Activated CD4-positive, alpha-beta T cell treated with anti-CD3 and anti-CD28 coated beads, Interleukin-2, amount 10 ng/mL, durations not matched to agents 24 days and 14 days (primary cell): ENCODE measurements at regions of chr3 and their contacts with region 1.

Region 1: GRCh38 chr3:9179826-9180763 is 69.4 kb downstream of the SRGAP3 start:
- DNase-seq: peak; percentile 75
- H3K4me3 Mint-ChIP-seq: peak overlapping the region; percentile 76
- H3K27ac Mint-ChIP-seq: peak overlapping the region; percentile 85
- H3K4me1 Mint-ChIP-seq: peaks cover 36% of the 10 kb centered on the region
- H3K27me3 Mint-ChIP-seq: peaks cover 8% of the 10 kb centered on the region

Region 2: GRCh38 chr3:8972639-8973038 is 207.5 kb before region 1 on chr3:
- intact Hi-C with region 1: no loop called
- DNase-seq: no peak
- H3K4me3 Mint-ChIP-seq: no peak overlapping the region
- H3K27ac Mint-ChIP-seq: no peak overlapping the region
- H3K4me1 Mint-ChIP-seq: peaks cover 5% of the 10 kb centered on the region
- H3K27me3 Mint-ChIP-seq: peaks cover 6% of the 10 kb centered on the region

Region 3: DNA sequence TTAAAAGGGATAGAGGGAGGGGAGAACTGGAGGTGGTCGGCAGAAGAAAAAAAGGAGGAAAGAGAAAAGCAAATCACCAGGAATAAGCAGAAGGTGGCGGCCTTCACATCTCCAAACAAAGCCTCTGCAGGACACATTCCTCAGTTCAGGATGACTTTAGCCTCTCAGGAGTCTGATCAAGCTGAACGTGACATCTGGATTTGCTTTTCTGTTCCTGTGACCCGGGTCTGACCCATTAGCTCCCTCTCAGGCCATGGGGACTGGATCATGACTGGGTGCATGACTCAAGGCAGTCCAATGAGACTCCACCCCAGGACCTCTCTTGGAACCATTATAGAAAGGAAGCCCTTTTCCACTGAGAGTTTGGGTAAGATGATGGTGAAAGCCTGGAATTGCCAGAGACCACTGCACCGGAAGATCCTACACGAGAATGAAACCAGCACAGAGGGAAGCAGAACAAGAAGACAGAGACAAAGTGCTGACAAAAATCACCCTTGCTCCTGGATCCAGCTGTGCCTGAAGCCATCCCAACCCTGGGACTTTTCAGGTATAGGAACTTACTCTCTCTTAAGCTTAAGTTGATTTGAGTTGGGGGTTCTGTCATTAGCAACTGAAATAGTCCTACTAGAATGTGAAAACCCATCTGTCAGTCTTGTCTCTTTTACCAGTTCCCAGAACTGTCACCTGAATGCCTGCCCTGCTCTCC is 171.4 kb before region 1 on chr3:
- intact Hi-C with region 1: no loop called
- DNase-seq: no peak
- H3K4me3 Mint-ChIP-seq: no peak overlapping the region
- H3K27ac Mint-ChIP-seq: no peak overlapping the region
- H3K4me1 Mint-ChIP-seq: peaks cover 7% of the 10 kb centered on the region
- H3K27me3 Mint-ChIP-seq: peaks cover 2% of the 10 kb centered on the region

Region 4: DNA sequence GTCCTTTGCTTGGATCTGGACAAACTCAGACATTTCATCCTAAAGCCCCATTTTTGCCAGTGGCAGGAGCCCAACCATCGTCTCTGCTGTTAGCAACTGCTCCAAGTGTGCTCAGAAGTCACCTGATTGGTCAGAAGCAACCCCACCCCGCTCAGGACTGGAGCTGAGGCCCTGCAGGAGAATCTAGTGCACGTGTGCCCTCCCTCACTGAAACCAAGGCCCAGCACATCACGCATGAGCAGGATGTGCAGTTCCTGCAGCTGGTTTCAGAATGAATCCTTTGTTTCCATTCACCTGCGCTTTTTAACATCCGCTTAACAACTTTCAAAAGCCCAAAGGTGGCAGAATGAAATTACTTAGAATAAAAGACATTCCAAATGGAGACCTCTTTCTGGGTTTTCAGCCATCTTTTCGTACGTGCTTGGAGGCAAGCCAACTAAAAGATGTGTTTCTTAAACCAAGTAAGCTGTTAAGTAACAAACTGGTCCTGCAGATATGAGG is 11.8 kb before region 1 on chr3:
- intact Hi-C with region 1: loop called (anchors 1 kb)
- DNase-seq: peak; percentile 92
- H3K4me3 Mint-ChIP-seq: peak overlapping the region; percentile 49
- H3K27ac Mint-ChIP-seq: peak overlapping the region; percentile 22
- H3K4me1 Mint-ChIP-seq: peaks cover 21% of the 10 kb centered on the region
- H3K27me3 Mint-ChIP-seq: no peaks in the 10 kb centered on the region

Region 5: DNA sequence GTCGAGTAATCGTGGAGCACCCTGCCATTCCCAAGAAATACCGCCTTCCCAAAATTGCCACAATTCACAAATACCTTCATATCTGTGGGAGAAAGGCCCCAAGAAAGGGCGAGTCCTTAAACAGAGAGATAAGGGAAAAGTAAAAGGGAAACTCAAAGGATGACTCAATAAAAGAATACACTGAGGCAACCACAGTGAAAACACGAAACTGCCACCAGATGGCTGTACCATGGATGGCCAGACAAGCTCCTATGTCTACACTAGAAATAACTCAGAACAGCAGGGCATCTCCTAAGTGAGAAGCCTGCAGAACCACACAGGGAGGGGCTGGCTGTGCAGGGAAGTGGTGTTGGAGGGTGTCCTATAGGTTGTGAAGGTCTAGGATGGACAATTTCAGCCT is 44.4 kb after region 1 on chr3:
- intact Hi-C with region 1: loop called (anchors 5 kb)
- DNase-seq: peak; percentile 72
- H3K4me3 Mint-ChIP-seq: no peak overlapping the region
- H3K27ac Mint-ChIP-seq: no peak overlapping the region
- H3K4me1 Mint-ChIP-seq: peaks cover 19% of the 10 kb centered on the region
- H3K27me3 Mint-ChIP-seq: peaks cover 2% of the 10 kb centered on the region